ENCODE measurements at regions of chr11 and their contacts with region 1.

Region 1: DNA sequence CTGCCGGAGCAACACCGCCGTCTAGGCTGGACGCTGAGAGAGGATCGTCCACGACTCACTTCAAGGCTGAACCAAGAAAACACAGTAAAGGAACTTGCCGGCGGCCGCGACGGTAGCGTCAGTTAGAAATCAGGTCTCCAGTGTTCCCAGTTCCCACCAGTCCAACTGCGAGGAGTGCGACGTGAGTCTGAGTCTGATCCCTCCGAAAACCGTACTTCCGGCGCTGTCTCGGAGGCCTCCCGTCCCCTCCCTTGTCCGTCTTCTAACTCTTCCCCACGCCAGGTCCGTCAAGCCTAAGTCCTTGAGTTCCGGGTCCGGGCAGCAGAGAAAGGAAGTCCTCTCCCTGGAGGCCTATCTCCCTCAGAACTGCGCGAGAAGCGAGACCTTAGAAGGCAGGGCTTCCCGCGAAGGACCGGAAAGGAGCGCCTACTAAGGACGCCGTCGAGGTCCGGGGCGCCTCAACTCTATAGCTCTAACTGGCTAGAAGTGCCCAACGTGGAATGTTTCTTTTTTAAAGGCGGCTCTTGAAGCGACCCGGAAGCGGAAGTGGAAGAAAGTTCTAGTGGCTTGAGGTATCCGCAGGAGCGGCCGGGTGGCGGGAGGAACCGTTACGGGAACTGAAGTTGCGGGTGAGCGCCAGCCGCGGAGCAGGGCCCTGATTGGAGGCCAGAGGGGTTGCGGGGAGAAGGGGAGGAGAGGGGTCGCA is at the starts of genes BANF1 and EIF1AD:
- DNase-seq: peak; percentile 91 to 92
- ATAC-seq: peak; percentile 89 to 93
- H3K4me3 ChIP-seq: peak within 1 kb of the TSS; percentile 80 to 97 (median 84)
- H3K27ac ChIP-seq: peak within 1 kb of the TSS; percentile 91 to 99 (median 97)
- H3K4me1 ChIP-seq: peaks cover 29 to 39% of the 10 kb centered on the region in 2 donors
- H3K27me3 ChIP-seq: no peaks in the 10 kb centered on the region
- CTCF ChIP-seq: no peak
- POLR2A ChIP-seq: peak; percentile 50 to 75
- total RNA-seq, gene BANF1: 57.4 to 126 (median 72.1) TPM
- total RNA-seq, gene EIF1AD: 29.3 to 39.8 (median 35.4) TPM

Region 2: GRCh38 chr11:65662799-65663638 is 339.1 kb before region 1 on chr11 and contains the start of gene RELA:
- in situ Hi-C with region 1: no loop called
- intact Hi-C with region 1: loop called (anchors 5 kb)
- DNase-seq: peak; percentile 78 to 89
- ATAC-seq: peak; percentile 90
- H3K4me3 ChIP-seq: peak within 1 kb of the TSS; percentile 65 to 91 (median 78)
- H3K27ac ChIP-seq: peak within 1 kb of the TSS; percentile 91 to 99 (median 96)
- H3K4me1 ChIP-seq: peaks cover 22 to 26% of the 10 kb centered on the region in 2 donors
- H3K27me3 ChIP-seq: no peaks in the 10 kb centered on the region
- CTCF ChIP-seq: peak in 3 of 5 experiments; percentile 11 to 43 (median 29)
- POLR2A ChIP-seq: peak; percentile 82 to 88
- total RNA-seq, gene RELA: 39.7 to 68.3 (median 56.3) TPM

Region 3: GRCh38 chr11:65711785-65712632 is 290.1 kb before region 1 on chr11 and contains the start of gene KAT5:
- in situ Hi-C with region 1: loop called (anchors 10 to 25 kb)
- intact Hi-C with region 1: no loop called
- DNase-seq: peak; percentile 97 to 98
- ATAC-seq: peak; percentile 92 to 94
- H3K4me3 ChIP-seq: peak within 1 kb of the TSS; percentile 73 to 97 (median 84)
- H3K27ac ChIP-seq: peak within 1 kb of the TSS; percentile 96 to 100 (median 99)
- H3K4me1 ChIP-seq: peaks cover 15 to 18% of the 10 kb centered on the region in 2 donors
- H3K27me3 ChIP-seq: no peaks in the 10 kb centered on the region
- CTCF ChIP-seq: peak; percentile 98 to 100 (median 100)
- POLR2A ChIP-seq: peak; percentile 83 to 86
- total RNA-seq, gene KAT5: 40.0 to 69.4 (median 50.0) TPM

Region 4: GRCh38 chr11:65888163-65888814 is 113.8 kb before region 1 on chr11 and contains the start of gene FIBP:
- in situ Hi-C with region 1: loop called in 1 of 4 experiments (anchors 10 kb)
- intact Hi-C with region 1: loop called (anchors 2 kb)
- DNase-seq: peak; percentile 97 to 98
- ATAC-seq: peak; percentile 68
- H3K4me3 ChIP-seq: peak within 1 kb of the TSS; percentile 66 to 86 (median 78)
- H3K27ac ChIP-seq: peak within 1 kb of the TSS; percentile 93 to 98 (median 96)
- H3K4me1 ChIP-seq: peaks cover 41 to 45% of the 10 kb centered on the region in 2 donors
- H3K27me3 ChIP-seq: no peaks in the 10 kb centered on the region
- CTCF ChIP-seq: peak; percentile 85 to 95 (median 93)
- POLR2A ChIP-seq: peak; percentile 80 to 92
- total RNA-seq, gene FIBP: 39.6 to 79.3 (median 53.0) TPM

Region 5: DNA sequence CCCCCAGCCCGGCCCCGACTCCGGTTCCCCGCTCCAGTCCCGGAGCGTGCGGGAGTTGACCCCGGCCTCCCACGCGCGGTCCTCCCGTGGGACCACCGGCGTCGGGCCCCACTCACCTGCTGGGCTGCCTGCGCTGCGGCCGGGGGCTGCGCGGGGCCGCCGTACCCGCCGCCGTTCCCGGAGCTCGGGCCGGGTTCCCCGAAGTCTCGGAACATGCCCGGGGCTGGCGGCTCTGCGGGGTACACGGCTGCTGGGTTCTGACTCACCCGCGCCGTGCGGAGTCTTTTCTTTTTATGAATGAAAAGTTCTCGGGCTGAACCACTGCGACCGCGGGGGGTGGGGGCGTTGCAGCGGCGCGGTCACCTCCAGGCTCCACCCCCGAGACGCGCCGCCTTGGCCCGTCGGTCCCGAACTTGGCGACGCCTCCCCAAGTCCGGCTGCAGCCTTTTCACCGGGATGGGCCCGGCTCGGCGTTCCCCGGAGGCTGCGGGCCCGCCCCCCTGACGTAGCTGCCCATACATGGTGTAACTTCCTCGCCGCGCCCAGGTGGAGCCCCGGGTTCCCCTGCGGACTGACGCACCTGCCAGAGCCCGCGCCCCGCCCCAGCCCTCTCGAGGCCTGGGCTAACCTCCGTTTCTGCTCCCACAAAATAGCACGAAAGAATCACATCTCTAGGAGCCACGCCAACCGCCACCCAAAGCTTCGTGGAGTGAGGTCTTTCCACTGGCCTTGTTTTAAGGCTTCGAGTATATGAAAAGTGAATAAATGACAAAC is 101.8 kb before region 1 on chr11 and contains the start of gene FOSL1:
- in situ Hi-C with region 1: no loop called
- intact Hi-C with region 1: no loop called
- DNase-seq: peak; percentile 71 to 83
- ATAC-seq: peak; percentile 81 to 88
- H3K4me3 ChIP-seq: peak within 1 kb of the TSS; percentile 43 to 71 (median 64)
- H3K27ac ChIP-seq: peak within 1 kb of the TSS in 3 of 4 donors; percentile 37 to 63 (median 53)
- H3K4me1 ChIP-seq: peaks cover 0 to 10% of the 10 kb centered on the region in 2 donors
- H3K27me3 ChIP-seq: peaks cover 12 to 26% (median 16%) of the 10 kb centered on the region in 3 donors
- CTCF ChIP-seq: no peak
- POLR2A ChIP-seq: peak; percentile 76 to 83
- total RNA-seq, gene FOSL1: 0.36 to 9.3 (median 5.2) TPM

Region 6: DNA sequence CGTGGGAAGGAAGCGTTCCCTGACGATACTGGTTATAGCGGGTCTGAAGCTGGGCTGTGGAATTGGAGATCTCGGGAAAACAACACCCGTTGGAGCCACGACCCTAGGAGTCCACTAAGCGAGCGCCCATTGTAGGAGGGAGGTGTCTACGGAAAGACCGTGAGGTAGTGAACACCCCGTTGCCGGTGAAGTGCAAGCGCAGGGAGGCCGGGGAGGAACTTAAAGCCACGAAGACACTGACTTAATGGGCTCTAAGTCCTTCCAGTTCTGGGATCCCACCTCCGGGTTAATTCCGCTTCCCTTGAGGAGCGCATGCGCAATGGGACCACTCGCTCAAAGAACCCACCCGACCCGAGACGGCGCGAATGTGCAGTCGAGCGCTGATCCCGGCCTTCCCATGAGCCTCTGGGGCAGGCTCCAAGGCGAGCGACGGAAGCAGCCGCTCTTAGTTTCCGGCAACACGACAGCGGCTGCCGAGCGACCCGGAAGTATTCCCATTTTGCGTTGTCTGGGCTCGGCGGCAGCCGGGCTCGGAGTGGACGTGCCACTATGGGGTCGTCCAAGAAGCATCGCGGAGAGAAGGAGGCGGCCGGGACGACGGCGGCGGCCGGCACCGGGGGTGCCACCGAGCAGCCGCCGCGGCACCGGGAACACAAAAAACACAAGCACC is 40.7 kb before region 1 on chr11 and contains the start of gene SART1:
- in situ Hi-C with region 1: no loop called
- intact Hi-C with region 1: loop called (anchors 1 kb)
- DNase-seq: peak; percentile 97 to 98
- ATAC-seq: peak; percentile 97 to 98
- H3K4me3 ChIP-seq: peak within 1 kb of the TSS; percentile 69 to 100 (median 88)
- H3K27ac ChIP-seq: peak within 1 kb of the TSS; percentile 81 to 96 (median 90)
- H3K4me1 ChIP-seq: peaks cover 16 to 24% of the 10 kb centered on the region in 2 donors
- H3K27me3 ChIP-seq: no peaks in the 10 kb centered on the region
- CTCF ChIP-seq: peak in 1 of 5 experiments; percentile 14
- POLR2A ChIP-seq: peak; percentile 61 to 81
- total RNA-seq, gene SART1: 12.0 to 55.2 (median 33.3) TPM

Region 7: GRCh38 chr11:66051766-66052663 is 49.9 kb after region 1 on chr11 and contains the start of gene SF3B2:
- in situ Hi-C with region 1: no loop called
- intact Hi-C with region 1: loop called (anchors 1 kb)
- DNase-seq: peak; percentile 96 to 97
- ATAC-seq: peak; percentile 94 to 95
- H3K4me3 ChIP-seq: peak within 1 kb of the TSS; percentile 95 to 100 (median 98)
- H3K27ac ChIP-seq: peak within 1 kb of the TSS; percentile 83 to 94 (median 90)
- H3K4me1 ChIP-seq: peaks cover 13 to 19% of the 10 kb centered on the region in 2 donors
- H3K27me3 ChIP-seq: peaks cover 0 to 3% (median 0%) of the 10 kb centered on the region in 3 donors
- CTCF ChIP-seq: no peak
- POLR2A ChIP-seq: peak; percentile 39 to 69
- total RNA-seq, gene SF3B2: 92.9 to 186 (median 124) TPM

Region 8: GRCh38 chr11:66288671-66289547 is 286.8 kb after region 1 on chr11 and contains the start of gene YIF1A:
- in situ Hi-C with region 1: no loop called
- intact Hi-C with region 1: loop called (anchors 2 kb)
- DNase-seq: peak; percentile 99 to 100
- ATAC-seq: peak; percentile 95 to 97
- H3K4me3 ChIP-seq: peak within 1 kb of the TSS; percentile 80 to 91 (median 85)
- H3K27ac ChIP-seq: peak within 1 kb of the TSS; percentile 84 to 93 (median 92)
- H3K4me1 ChIP-seq: peaks cover 20 to 36% of the 10 kb centered on the region in 2 donors
- H3K27me3 ChIP-seq: peaks cover 14 to 25% (median 21%) of the 10 kb centered on the region in 3 donors
- CTCF ChIP-seq: no peak
- POLR2A ChIP-seq: peak; percentile 93 to 97
- total RNA-seq, gene YIF1A: 106 to 137 (median 113) TPM